HepG2 (cell line): ENCODE measurements at regions of chr14 and their contacts with region 1.

Region 1: DNA sequence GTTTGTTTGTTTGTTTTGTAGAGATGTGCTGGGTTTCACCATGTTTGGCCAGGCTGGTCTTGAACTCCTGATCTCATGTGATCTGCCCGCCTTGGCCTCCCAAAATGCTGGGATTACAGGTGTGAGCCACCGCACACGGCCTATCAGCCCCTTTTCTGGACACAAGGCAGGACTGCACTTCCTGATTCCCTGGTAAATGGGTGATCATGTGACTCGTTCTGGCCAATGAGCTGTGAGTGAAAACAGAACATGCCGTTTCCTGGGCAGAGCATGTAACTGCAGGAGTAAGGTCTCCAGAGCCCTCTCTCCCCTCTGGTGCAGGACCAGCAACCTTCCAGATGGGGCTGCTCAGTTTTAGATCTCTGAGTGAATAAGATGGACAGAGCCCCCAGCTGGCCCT is 92.7 kb downstream of the ITPK1 start:
- DNase-seq: peak; percentile 78
- ATAC-seq: peak; percentile 10; the same call in 2 of the 3 replicates
- H3K4me3 ChIP-seq: no peak overlapping the region
- H3K27ac ChIP-seq: no peak overlapping the region
- H3K4me1 ChIP-seq: peaks cover 63% of the 10 kb centered on the region
- H3K27me3 ChIP-seq: no peaks in the 10 kb centered on the region
- CTCF ChIP-seq: no peak
- EP300 ChIP-seq: no peak
- POLR2A ChIP-seq: no peak
- RAD21 ChIP-seq: no peak

Region 2: GRCh38 chr14:92973261-92973797 is 49.7 kb before region 1 on chr14:
- CTCF ChIA-PET with region 1: no interaction called
- POLR2A ChIA-PET with region 1: no interaction called
- in situ Hi-C with region 1: no loop called
- intact Hi-C with region 1: loop called (anchors 1 kb)
- DNase-seq: peak; percentile 23
- ATAC-seq: peak; percentile 71
- H3K4me3 ChIP-seq: no peak overlapping the region
- H3K27ac ChIP-seq: no peak overlapping the region
- H3K4me1 ChIP-seq: peaks cover 8% of the 10 kb centered on the region
- H3K27me3 ChIP-seq: no peaks in the 10 kb centered on the region
- CTCF ChIP-seq: peak; percentile 87
- EP300 ChIP-seq: no peak
- POLR2A ChIP-seq: no peak
- RAD21 ChIP-seq: peak; percentile 87

Region 3: GRCh38 chr14:92986254-92987147 is 36.5 kb before region 1 on chr14:
- CTCF ChIA-PET with region 1: no interaction called
- POLR2A ChIA-PET with region 1: interaction called, 15 read pairs
- in situ Hi-C with region 1: no loop called
- intact Hi-C with region 1: loop called (anchors 2 kb)
- DNase-seq: peak; percentile 92
- ATAC-seq: peak; percentile 74
- H3K4me3 ChIP-seq: no peak overlapping the region; a peak in 1 of 6 replicates
- H3K27ac ChIP-seq: no peak overlapping the region
- H3K4me1 ChIP-seq: peaks cover 62% of the 10 kb centered on the region
- H3K27me3 ChIP-seq: no peaks in the 10 kb centered on the region
- CTCF ChIP-seq: no peak
- EP300 ChIP-seq: no peak
- POLR2A ChIP-seq: no peak
- RAD21 ChIP-seq: no peak

Region 4: DNA sequence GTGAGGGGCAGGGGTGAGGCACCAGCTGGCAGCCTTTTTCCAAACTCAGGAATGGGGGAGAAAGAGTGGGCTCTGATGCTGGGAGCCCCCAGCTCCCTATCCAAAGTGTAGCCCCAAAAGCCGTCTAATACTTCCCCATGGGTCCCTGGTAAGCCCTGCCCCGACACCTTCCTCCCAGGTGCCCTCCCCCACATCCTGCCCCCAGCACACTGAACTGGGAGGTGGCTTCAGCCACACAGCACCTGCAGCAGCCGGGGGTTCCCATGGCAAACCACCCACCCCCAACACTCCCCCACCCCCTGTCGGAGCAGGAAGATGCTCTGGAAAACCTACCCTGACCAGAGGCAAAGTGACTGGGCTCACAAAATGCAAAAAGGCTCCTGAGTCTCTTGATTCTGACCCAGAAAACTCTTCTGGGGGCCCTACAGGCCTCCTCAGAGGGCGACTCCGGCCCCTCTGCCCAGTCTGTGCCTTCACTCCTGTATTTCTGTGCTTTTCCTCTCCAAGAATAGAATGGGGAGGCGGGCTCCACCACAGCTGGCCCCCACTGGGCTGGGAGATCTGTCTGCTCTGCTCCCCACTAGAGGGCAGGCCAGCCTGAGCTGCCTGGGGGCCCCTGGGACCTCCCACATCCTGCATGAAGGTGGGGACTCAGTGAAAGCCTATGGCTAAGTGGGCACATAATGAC is 11.1 kb after region 1 on chr14:
- CTCF ChIA-PET with region 1: no interaction called
- POLR2A ChIA-PET with region 1: interaction called, 15 read pairs
- in situ Hi-C with region 1: no loop called
- intact Hi-C with region 1: loop called (anchors 1 kb)
- DNase-seq: no peak
- ATAC-seq: peak; percentile 27
- H3K4me3 ChIP-seq: no peak overlapping the region
- H3K27ac ChIP-seq: no peak overlapping the region
- H3K4me1 ChIP-seq: peaks cover 82% of the 10 kb centered on the region
- H3K27me3 ChIP-seq: no peaks in the 10 kb centered on the region
- CTCF ChIP-seq: peak; percentile 70
- EP300 ChIP-seq: no peak
- POLR2A ChIP-seq: no peak
- RAD21 ChIP-seq: peak; percentile 29; the same call in 1 of the 2 replicates

Region 5: DNA sequence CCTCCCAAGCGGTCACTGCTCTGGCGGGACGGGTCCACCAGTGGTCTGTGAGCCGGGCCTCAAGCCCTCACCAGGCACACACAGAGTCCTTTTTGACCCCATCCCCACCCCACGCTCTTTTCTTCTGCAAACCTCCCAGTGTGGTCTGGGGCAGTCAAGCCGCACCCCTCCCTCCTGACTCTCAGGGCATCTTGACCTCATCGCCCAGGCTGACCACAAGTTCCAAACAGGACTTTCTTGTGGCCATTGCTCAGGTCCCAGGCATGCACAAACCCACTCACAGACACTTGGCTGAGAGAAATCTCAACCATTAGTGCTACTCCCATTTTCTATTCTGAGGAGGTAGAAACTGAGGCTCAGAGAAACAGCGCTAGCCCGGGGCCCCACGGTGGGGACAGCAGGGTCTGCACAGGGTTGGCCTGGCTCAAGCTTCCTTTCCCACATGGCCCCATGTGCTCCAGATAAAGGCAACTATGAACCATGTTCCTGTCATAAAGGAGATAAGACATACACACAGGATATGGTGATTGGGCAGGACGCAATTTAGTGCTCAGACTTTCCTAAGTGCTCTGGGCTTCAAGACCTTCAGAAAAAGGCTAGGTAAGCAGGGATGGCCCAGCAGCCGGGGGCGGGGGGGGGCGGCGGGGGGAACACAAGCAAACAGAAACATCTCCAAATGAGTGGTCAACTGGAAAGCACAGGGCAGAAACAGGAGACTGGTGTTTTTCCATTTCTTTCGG is 23.1 kb after region 1 on chr14:
- CTCF ChIA-PET with region 1: no interaction called
- POLR2A ChIA-PET with region 1: no interaction called
- in situ Hi-C with region 1: no loop called
- intact Hi-C with region 1: no loop called
- DNase-seq: no peak
- ATAC-seq: no peak
- H3K4me3 ChIP-seq: no peak overlapping the region
- H3K27ac ChIP-seq: no peak overlapping the region
- H3K4me1 ChIP-seq: peaks cover 85% of the 10 kb centered on the region
- H3K27me3 ChIP-seq: no peaks in the 10 kb centered on the region
- CTCF ChIP-seq: no peak
- EP300 ChIP-seq: no peak
- POLR2A ChIP-seq: no peak
- RAD21 ChIP-seq: no peak

Region 6: DNA sequence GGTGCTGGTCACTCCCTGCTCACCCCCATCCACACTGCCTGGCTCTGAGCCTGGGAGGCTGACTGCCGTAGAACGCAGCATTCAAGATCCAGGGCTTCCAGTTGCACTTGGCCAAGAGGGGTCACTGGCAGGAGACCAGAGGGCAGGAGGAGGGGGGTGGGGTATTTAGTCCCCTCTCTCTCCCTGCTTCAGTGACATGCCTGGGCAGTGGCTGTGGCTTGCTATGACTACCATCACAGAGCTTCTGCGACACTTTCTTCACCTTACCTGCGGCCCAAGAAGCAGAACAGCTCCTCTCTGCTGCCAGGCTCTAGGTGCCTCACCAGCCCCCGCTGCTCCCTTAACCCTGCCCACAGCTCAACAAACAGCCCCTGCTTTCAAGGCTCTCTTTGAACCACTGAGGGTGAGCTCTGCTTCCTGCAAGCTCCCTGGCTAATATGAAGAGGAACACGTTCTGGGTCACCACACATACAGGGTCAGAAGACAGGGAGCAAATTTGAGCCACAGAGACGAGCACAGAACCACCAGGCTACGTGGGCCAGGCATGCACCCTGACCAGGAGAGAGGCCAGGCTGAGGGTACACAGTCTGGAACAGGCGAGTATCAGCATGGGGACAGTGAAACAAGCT is 37.0 kb after region 1 on chr14:
- CTCF ChIA-PET with region 1: no interaction called
- POLR2A ChIA-PET with region 1: no interaction called
- in situ Hi-C with region 1: no loop called
- intact Hi-C with region 1: no loop called
- DNase-seq: no peak
- ATAC-seq: peak; percentile 65
- H3K4me3 ChIP-seq: peak overlapping the region in 1 of 3 experiments; percentile 17; a peak in 1 of 6 replicates
- H3K27ac ChIP-seq: peak overlapping the region; percentile 34
- H3K4me1 ChIP-seq: peaks cover 51% of the 10 kb centered on the region
- H3K27me3 ChIP-seq: no peaks in the 10 kb centered on the region
- CTCF ChIP-seq: no peak; the same call in 1 of the 2 replicates
- EP300 ChIP-seq: no peak
- POLR2A ChIP-seq: no peak
- RAD21 ChIP-seq: no peak